ENCODE measurements at regions of chr3 and their contacts with region 1.

Region 1: GRCh38 chr3:22129091-22129490 is 378.1 kb upstream of the ZNF385D start:
- DNase-seq: no peak
- H3K4me3 ChIP-seq: no peak overlapping the region
- H3K27ac ChIP-seq: no peak overlapping the region
- H3K4me1 ChIP-seq: no peaks in the 10 kb centered on the region
- H3K27me3 ChIP-seq: no peaks in the 10 kb centered on the region
- CTCF ChIP-seq: no peak
- POLR2A ChIP-seq: no peak

Region 2: GRCh38 chr3:22098014-22098413 is 31.1 kb before region 1 on chr3:
- intact Hi-C with region 1: loop called (anchors 1 kb)
- DNase-seq: no peak
- H3K4me3 ChIP-seq: no peak overlapping the region
- H3K27ac ChIP-seq: no peak overlapping the region
- H3K4me1 ChIP-seq: no peaks in the 10 kb centered on the region
- H3K27me3 ChIP-seq: no peaks in the 10 kb centered on the region
- CTCF ChIP-seq: no peak
- POLR2A ChIP-seq: no peak